ENCODE measurements at regions of chr13 and their contacts with region 1.

Region 1: GRCh38 chr13:52850396-52851136 is 2.1 kb upstream of the PCDH8 start:
- DNase-seq: peak; percentile 72 to 94
- H3K4me3 ChIP-seq: peak overlapping the region; percentile 69 to 84 (median 74)
- H3K27ac ChIP-seq: peak overlapping the region; percentile 77; the same call in 1 of the 2 replicates
- H3K4me1 ChIP-seq: peaks cover 4 to 35% (median 25%) of the 10 kb centered on the region in 4 experiments
- H3K27me3 ChIP-seq: peaks cover 39 to 49% (median 45%) of the 10 kb centered on the region in 4 experiments
- CTCF ChIP-seq: peak in 2 of 3 experiments; percentile 70 to 86; a peak in 3 of 4 replicates
- EP300 ChIP-seq: no peak
- POLR2A ChIP-seq: no peak; a peak in 1 of 3 replicates
- RAD21 ChIP-seq: peak; percentile 25 to 42; a peak in 3 of 4 replicates

Region 2: GRCh38 chr13:52652196-52652979 is 198.2 kb before region 1 on chr13 and contains the start of gene SUGT1:
- CTCF ChIA-PET with region 1: interaction called, 16 read pairs
- POLR2A ChIA-PET with region 1: interaction called, 24 read pairs
- DNase-seq: peak; percentile 90 to 96
- H3K4me3 ChIP-seq: peak within 1 kb of the TSS; percentile 89 to 98 (median 95)
- H3K27ac ChIP-seq: peak within 1 kb of the TSS; percentile 99
- H3K4me1 ChIP-seq: peaks cover 0 to 5% (median 0%) of the 10 kb centered on the region in 4 experiments; a peak in 3 of 7 replicates
- H3K27me3 ChIP-seq: no peaks in the 10 kb centered on the region
- CTCF ChIP-seq: peak; percentile 53 to 78 (median 72)
- EP300 ChIP-seq: no peak; a peak in 1 of 3 replicates
- POLR2A ChIP-seq: peak; percentile 85 to 95
- RAD21 ChIP-seq: peak; percentile 19 to 44; a peak in 3 of 4 replicates
- total RNA-seq, gene SUGT1: 99.4 and 103 TPM in 2 replicates

Region 3: GRCh38 chr13:52723181-52723580 is 127.4 kb before region 1 on chr13:
- CTCF ChIA-PET with region 1: interaction called, 13 read pairs
- POLR2A ChIA-PET with region 1: no interaction called
- DNase-seq: no peak
- H3K4me3 ChIP-seq: no peak overlapping the region
- H3K27ac ChIP-seq: no peak overlapping the region
- H3K4me1 ChIP-seq: no peaks in the 10 kb centered on the region
- H3K27me3 ChIP-seq: no peaks in the 10 kb centered on the region
- CTCF ChIP-seq: no peak
- EP300 ChIP-seq: no peak
- POLR2A ChIP-seq: no peak
- RAD21 ChIP-seq: no peak

Region 4: DNA sequence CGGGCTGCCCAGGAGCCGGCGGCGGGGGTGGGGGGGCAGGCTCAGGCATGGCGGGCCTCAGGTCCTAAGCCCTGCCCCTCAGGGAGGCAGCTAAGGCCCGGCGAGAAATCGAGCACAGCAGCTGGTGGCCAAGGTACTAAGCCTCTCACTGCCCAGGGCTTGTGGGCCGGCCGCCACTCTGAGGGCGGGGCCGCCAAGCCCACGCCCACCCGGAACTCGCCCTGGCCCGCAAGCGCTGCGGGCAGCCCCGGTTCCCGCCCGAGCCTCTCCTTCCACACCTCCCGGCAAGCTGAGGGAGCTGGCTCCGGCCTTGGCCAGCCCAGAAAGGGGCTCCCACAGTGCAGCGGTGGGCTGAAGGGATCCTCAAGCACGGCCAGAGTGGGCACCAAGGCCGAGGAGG is 35.2 kb before region 1 on chr13:
- CTCF ChIA-PET with region 1: interaction called, 14 read pairs
- POLR2A ChIA-PET with region 1: interaction called, 3 read pairs
- DNase-seq: no peak
- H3K4me3 ChIP-seq: no peak overlapping the region
- H3K27ac ChIP-seq: no peak overlapping the region
- H3K4me1 ChIP-seq: no peaks in the 10 kb centered on the region
- H3K27me3 ChIP-seq: no peaks in the 10 kb centered on the region
- CTCF ChIP-seq: no peak
- EP300 ChIP-seq: no peak
- POLR2A ChIP-seq: no peak
- RAD21 ChIP-seq: no peak

Region 5: GRCh38 chr13:52862358-52863206 is 12.0 kb after region 1 on chr13:
- CTCF ChIA-PET with region 1: interaction called, 177 read pairs
- POLR2A ChIA-PET with region 1: interaction called, 7 read pairs
- DNase-seq: peak in 1 of 2 experiments; percentile 89
- H3K4me3 ChIP-seq: no peak overlapping the region
- H3K27ac ChIP-seq: no peak overlapping the region
- H3K4me1 ChIP-seq: peaks cover 0 to 4% (median 2%) of the 10 kb centered on the region in 4 experiments; a peak in 2 of 7 replicates
- H3K27me3 ChIP-seq: no peaks in the 10 kb centered on the region
- CTCF ChIP-seq: peak; percentile 22 to 80 (median 78)
- EP300 ChIP-seq: no peak
- POLR2A ChIP-seq: no peak
- RAD21 ChIP-seq: peak; percentile 65 to 75

Region 6: GRCh38 chr13:52896827-52897659 is 46.5 kb after region 1 on chr13:
- CTCF ChIA-PET with region 1: interaction called, 69 read pairs
- POLR2A ChIA-PET with region 1: no interaction called
- DNase-seq: peak in 1 of 2 experiments; percentile 82
- H3K4me3 ChIP-seq: no peak overlapping the region; a peak in 1 of 8 replicates
- H3K27ac ChIP-seq: no peak overlapping the region
- H3K4me1 ChIP-seq: peaks cover 0 to 25% (median 5%) of the 10 kb centered on the region in 4 experiments; a peak in 4 of 7 replicates
- H3K27me3 ChIP-seq: no peaks in the 10 kb centered on the region; a peak in 1 of 7 replicates
- CTCF ChIP-seq: peak; percentile 70 to 75 (median 73)
- EP300 ChIP-seq: no peak
- POLR2A ChIP-seq: no peak
- RAD21 ChIP-seq: peak; percentile 67 to 68

Region 7: GRCh38 chr13:53151336-53152056 is 300.9 kb after region 1 on chr13:
- CTCF ChIA-PET with region 1: interaction called, 16 read pairs
- POLR2A ChIA-PET with region 1: interaction called, 3 read pairs
- DNase-seq: peak; percentile 27 to 78
- H3K4me3 ChIP-seq: no peak overlapping the region
- H3K27ac ChIP-seq: no peak overlapping the region
- H3K4me1 ChIP-seq: no peaks in the 10 kb centered on the region
- H3K27me3 ChIP-seq: no peaks in the 10 kb centered on the region
- CTCF ChIP-seq: peak; percentile 45 to 93 (median 86)
- EP300 ChIP-seq: no peak
- POLR2A ChIP-seq: no peak
- RAD21 ChIP-seq: peak; percentile 94 to 95

Measured in H1 (cell line).